CD14-positive monocyte (primary cell): ENCODE measurements at regions of chr22 and their contacts with region 1.

Region 1: DNA sequence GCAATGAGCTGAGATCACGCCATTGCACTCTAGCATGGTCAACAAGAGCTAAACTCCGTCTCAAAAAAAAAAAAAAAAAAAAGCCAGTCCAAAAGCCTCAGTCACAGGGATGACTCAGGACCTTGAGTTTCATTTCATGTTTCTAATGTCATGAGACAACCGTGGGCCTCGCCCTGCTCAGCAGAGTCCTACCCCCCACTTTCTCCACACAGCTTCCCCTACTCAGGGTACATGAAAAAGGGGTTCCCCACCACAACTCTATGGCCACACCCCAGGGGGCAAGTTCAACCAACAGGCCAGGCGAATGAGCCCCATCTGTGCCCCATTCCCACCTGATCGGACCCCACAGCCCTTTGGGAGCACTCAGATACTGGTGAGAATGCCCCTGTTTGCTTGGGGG is 24.3 kb upstream of the ADA2 start:
- DNase-seq: peak; percentile 96 to 98 (median 98)
- H3K4me3 ChIP-seq: peak overlapping the region in 1 of 3 experiments; percentile 19
- H3K4me3 Mint-ChIP-seq: peak overlapping the region in 1 of 2 donors; percentile 75
- H3K27ac ChIP-seq: peak overlapping the region; percentile 99 to 100
- H3K27ac Mint-ChIP-seq: peak overlapping the region; percentile 99 to 100 (median 100)
- H3K4me1 ChIP-seq: peaks cover 50 to 57% of the 10 kb centered on the region in 2 donors
- H3K4me1 Mint-ChIP-seq: peaks cover 56% of the 10 kb centered on the region
- H3K27me3 ChIP-seq: no peaks in the 10 kb centered on the region
- H3K27me3 Mint-ChIP-seq: peaks cover 0 to 6% (median 0%) of the 10 kb centered on the region in 3 donors
- CTCF ChIP-seq: no peak

Region 2: GRCh38 chr22:17084554-17085276 is 158.8 kb before region 1 on chr22 and contains the start of gene IL17RA:
- intact Hi-C with region 1: loop called in 1 of 2 experiments (anchors 10 kb)
- DNase-seq: peak; percentile 84 to 90 (median 86)
- H3K4me3 ChIP-seq: peak within 1 kb of the TSS; percentile 89 to 91 (median 91)
- H3K4me3 Mint-ChIP-seq: peak within 1 kb of the TSS; percentile 96 to 99
- H3K27ac ChIP-seq: peak within 1 kb of the TSS; percentile 81 to 92
- H3K27ac Mint-ChIP-seq: peak within 1 kb of the TSS; percentile 90 to 96 (median 95)
- H3K4me1 ChIP-seq: peaks cover 40 to 50% of the 10 kb centered on the region in 2 donors
- H3K4me1 Mint-ChIP-seq: peaks cover 56% of the 10 kb centered on the region
- H3K27me3 ChIP-seq: no peaks in the 10 kb centered on the region
- H3K27me3 Mint-ChIP-seq: peaks cover 0 to 2% (median 0%) of the 10 kb centered on the region in 3 donors
- CTCF ChIP-seq: no peak
- polyA plus RNA-seq, gene IL17RA: 68.3 to 118 (median 96.7) TPM

Region 3: DNA sequence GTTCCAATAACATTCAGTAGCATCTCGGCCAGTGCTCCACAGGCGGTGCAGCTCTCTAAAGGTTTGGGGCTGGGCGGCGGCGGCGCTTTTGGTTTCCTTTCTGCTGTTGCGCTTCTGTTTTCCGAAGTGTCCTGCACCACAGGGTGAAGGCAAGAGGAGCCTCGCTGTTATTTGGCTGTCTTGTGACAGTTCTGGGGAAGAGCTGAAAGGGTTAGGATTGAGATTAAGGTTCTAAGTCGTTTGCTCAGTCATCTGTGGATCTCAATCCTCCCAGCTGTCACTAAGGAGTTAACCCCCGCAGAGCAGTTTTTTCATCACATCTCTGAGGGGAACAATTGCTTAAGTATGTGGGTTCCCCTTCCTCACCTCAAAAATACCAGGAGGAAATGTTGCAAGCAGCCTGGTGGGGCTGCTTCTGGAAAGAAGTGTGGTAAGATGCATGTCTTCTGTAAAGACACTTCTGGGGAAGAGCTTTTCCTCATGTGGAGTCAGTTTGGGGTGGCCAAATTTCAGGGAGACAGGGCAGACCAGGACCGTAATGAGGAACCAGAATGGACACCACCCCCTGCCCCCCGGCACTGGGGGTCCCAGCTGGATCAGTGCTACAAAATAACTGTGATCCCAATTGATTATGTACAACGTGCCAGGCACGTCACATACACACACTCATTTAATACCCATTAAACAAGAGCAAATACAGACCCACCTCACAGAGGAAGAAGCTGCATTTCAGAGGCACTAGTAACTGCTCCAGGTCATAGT is 136.6 kb before region 1 on chr22:
- intact Hi-C with region 1: loop called in 1 of 2 experiments (anchors 10 kb)
- DNase-seq: peak; percentile 81 to 92 (median 91)
- H3K4me3 ChIP-seq: peak overlapping the region; percentile 1 to 65 (median 11)
- H3K4me3 Mint-ChIP-seq: peak overlapping the region; percentile 72 to 83
- H3K27ac ChIP-seq: peak overlapping the region; percentile 75 to 85
- H3K27ac Mint-ChIP-seq: peak overlapping the region; percentile 93 to 98 (median 96)
- H3K4me1 ChIP-seq: peaks cover 99 to 100% of the 10 kb centered on the region in 2 donors
- H3K4me1 Mint-ChIP-seq: peaks cover 85% of the 10 kb centered on the region
- H3K27me3 ChIP-seq: no peaks in the 10 kb centered on the region
- H3K27me3 Mint-ChIP-seq: peaks cover 0 to 2% (median 0%) of the 10 kb centered on the region in 3 donors
- CTCF ChIP-seq: no peak

Region 4: DNA sequence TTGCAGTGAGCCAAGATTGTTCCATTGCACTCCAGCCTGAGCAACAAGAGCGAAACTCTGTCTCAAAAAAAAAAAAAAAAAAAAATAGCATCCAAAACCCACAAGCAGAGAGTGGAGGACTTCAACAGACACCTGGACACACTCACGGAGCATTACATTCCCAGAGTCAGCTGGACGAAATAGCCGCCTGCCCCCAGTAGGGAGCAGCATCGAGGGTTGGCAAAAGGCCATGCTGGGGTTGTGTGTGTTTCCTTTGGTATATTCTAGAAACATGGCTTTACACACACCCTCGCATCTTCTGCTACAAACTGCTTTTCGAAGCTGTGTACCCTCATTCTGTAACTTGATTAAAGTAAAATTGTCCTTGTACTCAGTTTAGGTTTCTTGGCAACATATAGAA is 29.5 kb before region 1 on chr22:
- intact Hi-C with region 1: loop called in 1 of 2 experiments (anchors 2 kb)
- DNase-seq: peak; percentile 51 to 63 (median 52)
- H3K4me3 ChIP-seq: no peak overlapping the region
- H3K4me3 Mint-ChIP-seq: no peak overlapping the region
- H3K27ac ChIP-seq: peak overlapping the region in 1 of 2 donors; percentile 83
- H3K27ac Mint-ChIP-seq: peak overlapping the region; percentile 43 to 89 (median 85)
- H3K4me1 ChIP-seq: peaks cover 32 to 46% of the 10 kb centered on the region in 2 donors
- H3K4me1 Mint-ChIP-seq: peaks cover 41% of the 10 kb centered on the region
- H3K27me3 ChIP-seq: no peaks in the 10 kb centered on the region
- H3K27me3 Mint-ChIP-seq: peaks cover 0 to 1% (median 0%) of the 10 kb centered on the region in 3 donors
- CTCF ChIP-seq: peak; percentile 64

Region 5: DNA sequence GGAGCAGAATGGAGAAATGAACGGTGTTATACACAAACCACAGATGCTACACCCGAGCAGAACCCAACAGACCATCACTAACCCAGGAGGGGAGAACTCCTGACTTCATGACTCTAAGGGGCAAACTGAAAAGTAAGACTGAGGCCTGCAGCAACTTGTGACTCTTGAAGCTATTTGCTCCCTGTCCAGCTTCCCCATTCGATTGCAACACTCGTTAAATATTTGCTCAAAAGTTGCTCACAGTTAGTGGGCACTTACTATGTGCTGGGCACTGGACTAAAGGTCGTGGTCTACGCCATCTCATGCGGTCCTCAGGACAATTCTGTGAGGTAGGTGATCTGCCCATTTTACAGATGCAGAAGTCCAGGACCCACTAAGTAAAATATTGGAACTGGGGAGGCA is 14.8 kb before region 1 on chr22:
- intact Hi-C with region 1: loop called in 1 of 2 experiments (anchors 2 kb)
- DNase-seq: peak; percentile 84 to 90 (median 84)
- H3K4me3 ChIP-seq: peak overlapping the region in 1 of 3 experiments; percentile 45
- H3K4me3 Mint-ChIP-seq: peak overlapping the region; percentile 25 to 50
- H3K27ac ChIP-seq: peak overlapping the region; percentile 28 to 94
- H3K27ac Mint-ChIP-seq: peak overlapping the region; percentile 89 to 97 (median 96)
- H3K4me1 ChIP-seq: peaks cover 30 to 31% of the 10 kb centered on the region in 2 donors
- H3K4me1 Mint-ChIP-seq: peaks cover 36% of the 10 kb centered on the region
- H3K27me3 ChIP-seq: no peaks in the 10 kb centered on the region
- H3K27me3 Mint-ChIP-seq: peaks cover 0 to 4% (median 0%) of the 10 kb centered on the region in 3 donors
- CTCF ChIP-seq: no peak

Region 6: DNA sequence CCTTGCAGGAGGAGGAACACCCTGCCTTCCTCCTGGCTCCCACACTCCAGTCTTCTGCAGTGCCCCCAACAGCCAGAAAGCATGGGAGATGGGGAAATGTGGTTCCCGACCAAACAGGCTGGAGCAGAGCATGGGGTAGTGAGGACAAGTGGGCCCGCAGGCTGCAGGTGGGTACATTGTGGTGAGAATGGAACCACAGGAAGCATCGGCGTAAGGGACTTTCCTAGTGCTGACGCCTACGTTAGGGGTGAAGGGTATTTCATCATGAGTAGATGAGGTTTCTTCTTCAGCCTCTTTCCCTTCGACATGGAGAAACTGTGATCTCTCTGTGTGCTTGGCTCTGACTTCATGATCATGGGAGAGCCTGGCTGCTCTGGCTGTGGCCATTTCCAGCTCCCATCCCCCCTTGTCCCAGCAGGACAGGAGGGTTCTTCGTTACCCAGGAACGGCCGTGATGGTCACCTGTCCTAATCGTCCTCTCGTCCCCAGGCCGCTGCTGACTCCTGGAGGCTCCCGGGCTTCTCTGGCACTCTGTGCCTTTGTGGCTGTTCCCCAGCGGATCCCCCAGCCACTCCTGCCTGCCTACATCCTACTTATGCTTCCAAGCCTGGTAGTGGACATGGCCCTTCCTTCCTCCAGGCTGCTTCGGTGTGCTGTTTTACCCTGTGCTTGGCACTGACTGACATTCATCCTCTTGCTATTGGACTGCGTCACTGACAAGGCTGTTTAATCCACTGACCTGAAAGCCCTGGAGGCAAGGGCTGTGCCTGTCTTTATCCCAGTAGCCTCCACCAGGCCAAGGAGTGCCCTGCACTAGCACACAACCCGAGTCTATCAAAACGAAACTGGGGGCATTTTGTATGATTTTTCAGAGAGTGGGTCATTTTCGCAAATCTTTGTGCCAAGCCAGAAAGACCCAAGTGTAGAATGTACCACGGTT is 60.6 kb after region 1 on chr22:
- intact Hi-C with region 1: no loop called
- DNase-seq: peak in 1 of 3 donors; percentile 45
- H3K4me3 ChIP-seq: no peak overlapping the region
- H3K4me3 Mint-ChIP-seq: no peak overlapping the region
- H3K27ac ChIP-seq: no peak overlapping the region
- H3K27ac Mint-ChIP-seq: peak overlapping the region in 2 of 7 donors; percentile 15 to 44
- H3K4me1 ChIP-seq: no peaks in the 10 kb centered on the region
- H3K4me1 Mint-ChIP-seq: no peaks in the 10 kb centered on the region
- H3K27me3 ChIP-seq: no peaks in the 10 kb centered on the region
- H3K27me3 Mint-ChIP-seq: peaks cover 0 to 2% (median 1%) of the 10 kb centered on the region in 3 donors
- CTCF ChIP-seq: no peak